Natural killer cell (primary cell): ENCODE measurements at regions of chr16 and their contacts with region 1.

Region 1: GRCh38 chr16:84726079-84726668 is 26.4 kb downstream of the USP10 start:
- DNase-seq: peak; percentile 84 to 91
- ATAC-seq: peak; percentile 72 to 87 (median 81)
- H3K4me3 ChIP-seq: no peak overlapping the region
- H3K4me3 Mint-ChIP-seq: no peak overlapping the region
- H3K27ac ChIP-seq: no peak overlapping the region
- H3K27ac Mint-ChIP-seq: peak overlapping the region in 1 of 2 donors; percentile 53
- H3K4me1 ChIP-seq: peaks cover 18% of the 10 kb centered on the region
- H3K4me1 Mint-ChIP-seq: peaks cover 57 to 58% of the 10 kb centered on the region in 2 donors
- H3K27me3 ChIP-seq: no peaks in the 10 kb centered on the region
- H3K27me3 Mint-ChIP-seq: no peaks in the 10 kb centered on the region
- CTCF ChIP-seq: peak; percentile 99

Region 2: GRCh38 chr16:84449171-84450140 is 276.7 kb before region 1 on chr16:
- intact Hi-C with region 1: no loop called
- DNase-seq: no peak
- ATAC-seq: no peak
- H3K4me3 ChIP-seq: no peak overlapping the region
- H3K4me3 Mint-ChIP-seq: no peak overlapping the region
- H3K27ac ChIP-seq: no peak overlapping the region
- H3K27ac Mint-ChIP-seq: no peak overlapping the region
- H3K4me1 ChIP-seq: no peaks in the 10 kb centered on the region
- H3K4me1 Mint-ChIP-seq: no peaks in the 10 kb centered on the region
- H3K27me3 ChIP-seq: no peaks in the 10 kb centered on the region
- H3K27me3 Mint-ChIP-seq: no peaks in the 10 kb centered on the region
- CTCF ChIP-seq: no peak

Region 3: GRCh38 chr16:84511180-84511824 is 214.9 kb before region 1 on chr16:
- intact Hi-C with region 1: loop called (anchors 1 kb)
- DNase-seq: peak; percentile 81 to 94
- ATAC-seq: peak; percentile 53 to 72 (median 56)
- H3K4me3 ChIP-seq: no peak overlapping the region
- H3K4me3 Mint-ChIP-seq: no peak overlapping the region
- H3K27ac ChIP-seq: no peak overlapping the region
- H3K27ac Mint-ChIP-seq: no peak overlapping the region
- H3K4me1 ChIP-seq: peaks cover 67% of the 10 kb centered on the region
- H3K4me1 Mint-ChIP-seq: peaks cover 21 to 41% of the 10 kb centered on the region in 2 donors
- H3K27me3 ChIP-seq: no peaks in the 10 kb centered on the region
- H3K27me3 Mint-ChIP-seq: peaks cover 0 to 9% of the 10 kb centered on the region in 2 donors
- CTCF ChIP-seq: peak; percentile 97

Region 4: GRCh38 chr16:84617791-84618580 is 108.2 kb before region 1 on chr16 and contains the start of gene COTL1:
- intact Hi-C with region 1: loop called (anchors 5 kb)
- DNase-seq: peak; percentile 89 to 97
- ATAC-seq: peak; percentile 93 to 96 (median 96)
- H3K4me3 ChIP-seq: peak within 1 kb of the TSS; percentile 78
- H3K4me3 Mint-ChIP-seq: peak within 1 kb of the TSS; percentile 95
- H3K27ac ChIP-seq: peak within 1 kb of the TSS; percentile 26
- H3K27ac Mint-ChIP-seq: peak within 1 kb of the TSS; percentile 48 to 85
- H3K4me1 ChIP-seq: peaks cover 46% of the 10 kb centered on the region
- H3K4me1 Mint-ChIP-seq: peaks cover 12 to 24% of the 10 kb centered on the region in 2 donors
- H3K27me3 ChIP-seq: no peaks in the 10 kb centered on the region
- H3K27me3 Mint-ChIP-seq: peaks cover 0 to 13% of the 10 kb centered on the region in 2 donors
- CTCF ChIP-seq: no peak
- total RNA-seq, gene COTL1: 43.7 to 187 (median 116) TPM

Region 5: GRCh38 chr16:84672276-84673202 is 53.6 kb before region 1 on chr16:
- intact Hi-C with region 1: loop called (anchors 1 kb)
- DNase-seq: peak; percentile 78 to 87
- ATAC-seq: peak; percentile 91 to 99 (median 99)
- H3K4me3 ChIP-seq: no peak overlapping the region
- H3K4me3 Mint-ChIP-seq: no peak overlapping the region
- H3K27ac ChIP-seq: no peak overlapping the region
- H3K27ac Mint-ChIP-seq: no peak overlapping the region
- H3K4me1 ChIP-seq: peaks cover 3% of the 10 kb centered on the region
- H3K4me1 Mint-ChIP-seq: no peaks in the 10 kb centered on the region
- H3K27me3 ChIP-seq: no peaks in the 10 kb centered on the region
- H3K27me3 Mint-ChIP-seq: no peaks in the 10 kb centered on the region
- CTCF ChIP-seq: peak; percentile 91

Region 6: GRCh38 chr16:84699712-84700445 is 26.3 kb before region 1 on chr16 and contains the start of gene USP10:
- intact Hi-C with region 1: loop called (anchors 1 kb)
- DNase-seq: peak; percentile 87 to 95
- ATAC-seq: peak; percentile 86 to 90 (median 87)
- H3K4me3 ChIP-seq: peak within 1 kb of the TSS; percentile 89
- H3K4me3 Mint-ChIP-seq: peak within 1 kb of the TSS; percentile 97
- H3K27ac ChIP-seq: peak within 1 kb of the TSS; percentile 81
- H3K27ac Mint-ChIP-seq: peak within 1 kb of the TSS; percentile 88 to 92
- H3K4me1 ChIP-seq: peaks cover 10% of the 10 kb centered on the region
- H3K4me1 Mint-ChIP-seq: peaks cover 22 to 27% of the 10 kb centered on the region in 2 donors
- H3K27me3 ChIP-seq: no peaks in the 10 kb centered on the region
- H3K27me3 Mint-ChIP-seq: no peaks in the 10 kb centered on the region
- CTCF ChIP-seq: no peak
- total RNA-seq, gene USP10: 78.4 to 103 (median 100) TPM

Region 7: GRCh38 chr16:84738255-84739038 is 12.3 kb after region 1 on chr16:
- intact Hi-C with region 1: loop called (anchors 1 kb)
- DNase-seq: peak; percentile 69 to 91
- ATAC-seq: peak; percentile 85 to 89 (median 88)
- H3K4me3 ChIP-seq: no peak overlapping the region
- H3K4me3 Mint-ChIP-seq: peak overlapping the region; percentile 45
- H3K27ac ChIP-seq: no peak overlapping the region
- H3K27ac Mint-ChIP-seq: peak overlapping the region in 1 of 2 donors; percentile 70
- H3K4me1 ChIP-seq: peaks cover 25% of the 10 kb centered on the region
- H3K4me1 Mint-ChIP-seq: peaks cover 48 to 62% of the 10 kb centered on the region in 2 donors
- H3K27me3 ChIP-seq: no peaks in the 10 kb centered on the region
- H3K27me3 Mint-ChIP-seq: no peaks in the 10 kb centered on the region
- CTCF ChIP-seq: peak; percentile 87

Region 8: GRCh38 chr16:84864326-84864955 is 138.3 kb after region 1 on chr16:
- intact Hi-C with region 1: no loop called
- DNase-seq: no peak
- ATAC-seq: no peak
- H3K4me3 ChIP-seq: no peak overlapping the region
- H3K4me3 Mint-ChIP-seq: no peak overlapping the region
- H3K27ac ChIP-seq: no peak overlapping the region
- H3K27ac Mint-ChIP-seq: no peak overlapping the region
- H3K4me1 ChIP-seq: no peaks in the 10 kb centered on the region
- H3K4me1 Mint-ChIP-seq: no peaks in the 10 kb centered on the region
- H3K27me3 ChIP-seq: no peaks in the 10 kb centered on the region
- H3K27me3 Mint-ChIP-seq: peaks cover 0 to 22% of the 10 kb centered on the region in 2 donors
- CTCF ChIP-seq: no peak